ENCODE measurements at regions of chr16 and their contacts with region 1.

Region 1: DNA sequence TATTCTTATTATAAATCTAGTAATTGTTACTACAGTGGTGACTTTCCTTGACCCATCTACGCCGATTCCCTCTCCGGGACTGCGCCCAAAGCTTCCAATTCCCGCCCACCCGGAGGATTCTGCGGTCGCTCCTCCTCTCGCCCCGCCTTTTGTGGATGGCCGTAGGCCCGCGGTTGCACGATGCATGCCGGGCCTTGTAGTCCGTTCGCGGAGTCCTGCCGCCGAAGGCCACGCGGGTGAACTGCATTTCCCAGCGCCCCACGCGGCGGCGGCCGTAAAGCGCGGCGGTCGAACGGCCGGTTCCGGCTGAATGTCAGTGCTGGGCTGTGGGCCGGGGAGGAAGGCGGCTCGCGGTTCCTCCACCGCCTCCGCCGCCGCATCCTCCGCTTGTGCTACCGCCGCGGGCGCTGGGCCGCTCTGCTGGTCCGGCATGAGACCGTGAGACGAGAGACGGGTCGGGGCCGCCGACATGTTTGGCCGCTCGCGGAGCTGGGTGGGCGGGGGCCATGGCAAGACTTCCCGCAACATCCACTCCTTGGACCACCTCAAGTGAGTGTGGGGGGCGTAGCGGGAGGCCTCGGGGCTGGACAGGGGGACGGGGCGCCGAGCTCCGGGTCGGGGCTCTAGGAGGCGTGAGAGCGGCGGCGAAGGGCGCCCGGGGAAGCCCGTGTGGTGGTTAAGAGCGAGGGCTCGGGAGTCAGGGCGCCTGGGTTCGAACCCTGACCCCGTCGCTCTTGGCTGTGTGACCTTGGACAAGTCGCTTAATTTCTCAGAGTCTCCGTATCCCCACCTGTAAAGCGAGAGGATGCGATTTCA is at the start of gene CLEC16A:
- DNase-seq: peak; percentile 97
- H3K4me3 Mint-ChIP-seq: peak within 1 kb of the TSS; percentile 78
- H3K27ac Mint-ChIP-seq: peak within 1 kb of the TSS; percentile 26
- H3K4me1 Mint-ChIP-seq: peaks cover 72% of the 10 kb centered on the region
- H3K27me3 Mint-ChIP-seq: no peaks in the 10 kb centered on the region
- total RNA-seq, gene CLEC16A: 30.3 to 32.4 TPM

Region 2: GRCh38 chr16:10743610-10744393 is 200.7 kb before region 1 on chr16 and contains the start of gene NUBP1:
- CTCF ChIA-PET with region 1: no interaction called
- POLR2A ChIA-PET with region 1: interaction called, 12 read pairs
- DNase-seq: peak; percentile 100
- H3K4me3 Mint-ChIP-seq: peak within 1 kb of the TSS; percentile 86
- H3K27ac Mint-ChIP-seq: peak within 1 kb of the TSS; percentile 97
- H3K4me1 Mint-ChIP-seq: peaks cover 57% of the 10 kb centered on the region
- H3K27me3 Mint-ChIP-seq: no peaks in the 10 kb centered on the region
- total RNA-seq, gene NUBP1: 29.4 to 31.5 TPM

Region 3: GRCh38 chr16:10828851-10829731 is 115.4 kb before region 1 on chr16:
- CTCF ChIA-PET with region 1: no interaction called
- POLR2A ChIA-PET with region 1: no interaction called
- DNase-seq: no peak
- H3K4me3 Mint-ChIP-seq: no peak overlapping the region
- H3K27ac Mint-ChIP-seq: no peak overlapping the region
- H3K4me1 Mint-ChIP-seq: no peaks in the 10 kb centered on the region
- H3K27me3 Mint-ChIP-seq: peaks cover 11% of the 10 kb centered on the region

Region 4: DNA sequence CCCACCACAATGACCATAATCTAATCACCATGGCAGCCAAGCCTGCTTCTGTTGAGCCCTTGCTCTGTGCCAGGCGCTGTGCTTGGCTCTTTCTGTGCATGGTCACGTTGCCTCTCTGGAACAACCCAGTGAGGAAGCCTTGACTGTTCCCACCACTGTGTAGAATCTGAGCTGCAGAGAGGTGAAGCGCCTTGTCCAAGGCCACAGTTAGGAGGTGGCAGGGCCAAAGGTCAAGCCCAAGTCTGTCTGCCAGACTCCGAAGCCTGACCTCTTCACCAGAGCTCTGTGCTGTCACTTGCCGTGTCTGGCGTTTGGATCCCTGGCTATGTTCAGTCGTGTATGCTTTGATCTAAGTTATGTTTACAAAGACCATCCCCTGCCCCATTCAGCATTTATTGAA is 10.4 kb after region 1 on chr16:
- CTCF ChIA-PET with region 1: interaction called, 10 read pairs
- POLR2A ChIA-PET with region 1: interaction called, 4 read pairs
- DNase-seq: no peak
- H3K4me3 Mint-ChIP-seq: no peak overlapping the region
- H3K27ac Mint-ChIP-seq: no peak overlapping the region
- H3K4me1 Mint-ChIP-seq: peaks cover 62% of the 10 kb centered on the region
- H3K27me3 Mint-ChIP-seq: no peaks in the 10 kb centered on the region

Region 5: GRCh38 chr16:10989559-10989958 is 45.1 kb after region 1 on chr16:
- CTCF ChIA-PET with region 1: no interaction called
- POLR2A ChIA-PET with region 1: no interaction called
- DNase-seq: no peak
- H3K4me3 Mint-ChIP-seq: no peak overlapping the region
- H3K27ac Mint-ChIP-seq: peak overlapping the region; percentile 85
- H3K4me1 Mint-ChIP-seq: peaks cover 90% of the 10 kb centered on the region
- H3K27me3 Mint-ChIP-seq: no peaks in the 10 kb centered on the region

Region 6: DNA sequence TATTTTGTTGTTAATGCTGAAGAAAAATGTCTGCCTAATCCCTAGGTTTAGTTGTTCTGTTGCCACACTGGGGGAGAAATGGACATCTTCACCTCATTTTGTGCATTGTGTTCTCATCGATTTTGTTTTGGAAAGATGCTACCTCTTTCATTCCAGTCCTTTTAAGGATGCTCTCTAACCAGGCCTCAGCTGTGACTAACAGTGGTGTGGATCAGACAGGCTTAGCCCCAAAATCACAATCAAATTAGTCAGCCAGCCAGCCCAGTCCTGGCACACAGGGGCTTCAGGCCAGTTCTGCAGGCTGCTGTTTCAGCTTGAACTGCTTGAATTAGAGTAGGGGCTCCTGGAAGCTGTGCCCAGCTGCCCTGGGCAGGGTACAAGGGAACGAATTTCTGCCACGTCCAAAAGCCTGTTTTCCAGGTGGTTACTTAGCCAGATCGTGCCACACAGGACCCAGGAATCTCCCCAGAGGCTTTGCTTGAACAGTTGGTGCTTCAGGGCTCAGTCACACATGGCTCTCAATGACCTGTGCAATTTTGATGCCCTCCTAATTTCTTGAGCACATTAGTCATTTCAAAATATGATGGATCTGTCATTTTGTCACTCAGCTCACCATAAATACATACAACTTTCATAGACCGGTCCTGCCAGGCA is 60.6 kb after region 1 on chr16:
- CTCF ChIA-PET with region 1: no interaction called
- POLR2A ChIA-PET with region 1: no interaction called
- DNase-seq: no peak
- H3K4me3 Mint-ChIP-seq: no peak overlapping the region
- H3K27ac Mint-ChIP-seq: no peak overlapping the region
- H3K4me1 Mint-ChIP-seq: peaks cover 32% of the 10 kb centered on the region
- H3K27me3 Mint-ChIP-seq: no peaks in the 10 kb centered on the region

Region 7: GRCh38 chr16:11133344-11133943 is 189.0 kb after region 1 on chr16:
- CTCF ChIA-PET with region 1: no interaction called
- POLR2A ChIA-PET with region 1: no interaction called
- DNase-seq: no peak
- H3K4me3 Mint-ChIP-seq: no peak overlapping the region
- H3K27ac Mint-ChIP-seq: no peak overlapping the region
- H3K4me1 Mint-ChIP-seq: peaks cover 53% of the 10 kb centered on the region
- H3K27me3 Mint-ChIP-seq: no peaks in the 10 kb centered on the region

Measured in activated CD4-positive, alpha-beta memory T cell treated with anti-CD3 and anti-CD28 coated beads, Interleukin-2, amount 10 ng/mL, durations not matched to agents 7 days and 5 days (primary cell).